ENCODE measurements at regions of chr18 and their contacts with region 1.

Region 1: GRCh38 chr18:1104181-1104881 is 199.7 kb downstream of the ADCYAP1 start:
- DNase-seq: no peak
- H3K4me3 ChIP-seq: no peak overlapping the region
- H3K27ac ChIP-seq: peak overlapping the region; percentile 21
- H3K4me1 ChIP-seq: no peaks in the 10 kb centered on the region
- H3K27me3 ChIP-seq: no peaks in the 10 kb centered on the region
- CTCF ChIP-seq: no peak

Region 2: GRCh38 chr18:877238-877637 is 227.1 kb before region 1 on chr18:
- intact Hi-C with region 1: loop called (anchors 10 kb)
- DNase-seq: no peak
- H3K4me3 ChIP-seq: no peak overlapping the region
- H3K27ac ChIP-seq: no peak overlapping the region
- H3K4me1 ChIP-seq: no peaks in the 10 kb centered on the region
- H3K27me3 ChIP-seq: peaks cover 21% of the 10 kb centered on the region
- CTCF ChIP-seq: no peak

Region 3: GRCh38 chr18:1002653-1003178 is 101.6 kb before region 1 on chr18:
- intact Hi-C with region 1: no loop called
- DNase-seq: no peak
- H3K4me3 ChIP-seq: no peak overlapping the region
- H3K27ac ChIP-seq: no peak overlapping the region
- H3K4me1 ChIP-seq: no peaks in the 10 kb centered on the region
- H3K27me3 ChIP-seq: no peaks in the 10 kb centered on the region
- CTCF ChIP-seq: no peak

Region 4: DNA sequence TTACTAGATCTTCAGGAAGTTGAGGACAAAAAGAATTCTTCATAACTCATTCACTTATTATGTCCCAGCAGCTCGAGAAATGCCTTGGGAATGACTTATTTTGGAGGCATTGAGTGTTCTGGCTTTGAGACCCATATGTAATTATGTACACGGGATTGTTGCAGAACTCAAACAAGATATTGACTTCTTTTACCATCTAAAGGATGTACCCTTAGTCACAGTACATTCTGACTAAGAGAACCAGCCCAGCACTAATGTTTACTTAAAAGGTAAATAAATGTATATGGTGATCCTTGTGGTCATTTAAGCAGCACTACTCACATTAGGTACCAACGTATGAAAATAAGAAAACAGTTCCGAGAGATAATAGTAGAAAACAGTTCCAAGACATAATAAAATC is 69.3 kb after region 1 on chr18:
- intact Hi-C with region 1: loop called (anchors 10 kb)
- DNase-seq: no peak
- H3K4me3 ChIP-seq: no peak overlapping the region
- H3K27ac ChIP-seq: no peak overlapping the region
- H3K4me1 ChIP-seq: no peaks in the 10 kb centered on the region
- H3K27me3 ChIP-seq: no peaks in the 10 kb centered on the region
- CTCF ChIP-seq: no peak